Breast epithelium (tissue), 4 donors: ENCODE measurements at regions of chr7 and their contacts with region 1.

Region 1: DNA sequence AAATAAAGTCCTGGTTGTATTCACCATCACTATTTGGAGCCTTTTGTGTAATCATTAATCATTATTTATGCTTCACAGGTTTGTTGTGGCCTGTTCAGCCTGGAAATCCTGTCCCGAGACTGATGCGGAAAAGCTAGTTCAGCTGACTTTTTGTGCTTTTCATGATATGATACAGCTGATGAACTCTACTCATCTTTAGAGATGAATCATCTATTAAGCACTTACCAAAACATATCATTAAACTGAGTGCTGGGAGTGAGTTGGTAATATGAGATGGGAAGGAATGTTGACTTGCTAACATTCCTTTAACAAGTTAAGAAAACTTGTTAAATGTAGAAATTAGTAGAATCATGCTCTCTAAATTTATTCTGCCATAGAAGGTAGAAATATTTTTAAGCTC is 53.0 kb downstream of the CROT start:
- DNase-seq: no peak
- H3K4me3 ChIP-seq: no peak overlapping the region
- H3K27ac ChIP-seq: no peak overlapping the region
- H3K4me1 ChIP-seq: no peaks in the 10 kb centered on the region
- H3K27me3 ChIP-seq: no peaks in the 10 kb centered on the region
- CTCF ChIP-seq: no peak
- POLR2A ChIP-seq: no peak

Region 2: DNA sequence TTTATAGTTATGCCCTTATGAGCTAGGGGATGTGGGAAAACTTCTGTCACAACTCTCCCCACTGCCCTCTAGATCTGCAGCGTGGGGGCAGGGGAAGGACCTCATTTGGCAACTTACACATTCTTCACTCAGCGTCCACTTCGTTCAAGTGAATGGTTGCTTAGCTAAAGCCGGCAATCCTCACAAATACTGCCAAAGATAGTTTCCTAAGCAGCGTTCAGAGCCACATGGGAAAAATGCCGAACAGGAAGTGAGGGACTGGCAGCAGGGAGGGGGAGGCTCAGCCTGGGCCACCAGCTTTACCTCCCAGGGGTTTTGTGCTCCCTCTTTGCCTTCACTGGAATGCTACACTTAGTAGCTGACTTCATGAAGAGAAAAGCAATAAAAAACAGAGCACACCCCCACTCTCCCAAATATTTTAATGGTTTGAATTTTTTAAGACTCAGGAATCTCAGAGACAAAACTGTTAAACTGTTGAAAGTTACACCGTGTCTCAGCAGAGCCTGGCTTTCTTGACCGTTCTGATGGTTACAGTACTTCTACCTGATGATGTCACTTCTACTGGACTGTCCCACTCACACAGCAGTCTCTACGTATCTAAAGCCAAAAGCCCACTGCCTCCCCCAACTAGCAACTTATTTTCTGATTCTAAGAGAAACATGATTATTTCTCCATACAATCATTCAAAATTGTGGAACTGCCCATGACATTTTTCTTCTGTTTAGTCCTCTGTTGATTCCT is 744.4 kb before region 1 on chr7:
- intact Hi-C with region 1: no loop called
- DNase-seq: no peak
- H3K4me3 ChIP-seq: peak overlapping the region in 1 of 3 donors; percentile 21
- H3K27ac ChIP-seq: no peak overlapping the region
- H3K4me1 ChIP-seq: no peaks in the 10 kb centered on the region
- H3K27me3 ChIP-seq: no peaks in the 10 kb centered on the region
- CTCF ChIP-seq: no peak
- POLR2A ChIP-seq: no peak

Region 3: GRCh38 chr7:87206361-87206760 is 192.1 kb before region 1 on chr7:
- intact Hi-C with region 1: no loop called
- DNase-seq: no peak
- H3K4me3 ChIP-seq: no peak overlapping the region
- H3K27ac ChIP-seq: no peak overlapping the region
- H3K4me1 ChIP-seq: no peaks in the 10 kb centered on the region
- H3K27me3 ChIP-seq: no peaks in the 10 kb centered on the region
- CTCF ChIP-seq: no peak
- POLR2A ChIP-seq: no peak

Region 4: DNA sequence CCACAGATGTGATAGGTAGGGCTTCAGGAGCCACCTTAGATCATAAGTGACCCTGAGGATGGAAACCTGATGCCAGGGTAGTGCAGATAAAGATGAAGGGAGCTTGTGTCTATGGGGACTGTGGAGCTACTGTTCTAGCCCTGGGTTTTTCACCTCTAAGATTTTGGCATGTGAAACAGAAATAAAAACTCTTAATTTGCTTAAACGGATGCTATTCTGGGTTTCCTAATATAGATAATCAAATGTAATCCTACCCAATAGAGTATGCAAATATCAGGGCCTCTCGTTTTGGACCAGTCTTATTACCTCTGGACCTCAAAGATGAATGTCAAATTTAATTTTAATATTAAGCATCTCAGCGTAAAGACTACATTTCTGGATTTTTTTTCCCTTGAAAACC is 27.7 kb after region 1 on chr7:
- intact Hi-C with region 1: loop called (anchors 2 kb)
- DNase-seq: no peak
- H3K4me3 ChIP-seq: no peak overlapping the region
- H3K27ac ChIP-seq: no peak overlapping the region
- H3K4me1 ChIP-seq: no peaks in the 10 kb centered on the region
- H3K27me3 ChIP-seq: no peaks in the 10 kb centered on the region
- CTCF ChIP-seq: no peak
- POLR2A ChIP-seq: no peak